Activated T-helper 1 cell treated with anti-CD3 and anti-CD28 coated beads, Interleukin-12 subunit alpha, Interleukin-12 subunit beta, Interleukin-2, Interleukin-4 antibody, amounts not matched to agents 30 ng/mL and 10 ng/mL and 1 ng/mL, durations not matched to agents 14 hours and 24 hours and 36 hours (primary cell): ENCODE measurements at regions of chr2 and their contacts with region 1.

Region 1: DNA sequence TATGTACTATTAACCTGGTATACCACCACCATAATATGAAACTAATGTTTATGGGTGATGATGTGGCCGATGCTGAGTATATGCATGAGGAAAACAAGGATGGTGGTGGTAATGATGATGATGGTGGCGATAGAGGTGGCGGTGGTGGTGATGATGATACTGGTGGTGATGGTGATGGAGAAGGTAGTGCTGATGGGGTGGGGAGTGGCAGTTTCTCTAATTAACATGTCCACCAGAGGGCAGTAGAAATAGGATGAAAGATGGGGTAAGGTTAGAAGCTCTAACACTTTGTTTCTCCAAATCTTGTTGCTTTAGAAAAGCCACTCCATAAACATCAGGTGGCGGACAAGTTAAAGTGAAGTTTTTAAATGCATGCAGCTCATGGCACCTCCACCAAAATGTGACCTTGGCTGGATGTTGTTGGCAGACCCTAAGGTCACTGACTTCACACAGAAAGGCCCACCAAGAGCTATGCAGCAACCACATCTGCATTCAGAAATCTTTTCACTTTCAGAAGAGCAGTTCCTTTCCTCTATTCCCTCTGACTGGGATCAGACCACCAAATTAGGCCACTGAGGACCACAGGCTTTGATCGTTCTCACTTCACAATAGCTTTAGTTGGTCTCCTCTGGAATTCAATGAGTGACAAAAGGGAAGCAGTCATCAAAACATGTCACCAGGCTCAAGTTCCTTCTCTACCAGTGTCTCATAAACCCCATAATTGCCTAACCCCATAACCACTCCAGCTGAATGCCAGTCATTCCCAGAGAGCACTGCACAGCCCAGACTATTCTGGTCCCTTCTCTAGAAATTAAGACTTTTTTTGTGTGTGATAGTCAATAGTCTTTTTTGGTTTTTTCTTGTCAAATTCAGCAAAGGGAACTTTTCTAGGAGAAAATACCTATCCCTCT is 7.5 kb upstream of the BCL11A start:
- DNase-seq: no peak
- H3K4me3 Mint-ChIP-seq: no peak overlapping the region
- H3K27ac Mint-ChIP-seq: no peak overlapping the region
- H3K4me1 Mint-ChIP-seq: peaks cover 6% of the 10 kb centered on the region
- H3K27me3 Mint-ChIP-seq: peaks cover 63% of the 10 kb centered on the region

Region 2: DNA sequence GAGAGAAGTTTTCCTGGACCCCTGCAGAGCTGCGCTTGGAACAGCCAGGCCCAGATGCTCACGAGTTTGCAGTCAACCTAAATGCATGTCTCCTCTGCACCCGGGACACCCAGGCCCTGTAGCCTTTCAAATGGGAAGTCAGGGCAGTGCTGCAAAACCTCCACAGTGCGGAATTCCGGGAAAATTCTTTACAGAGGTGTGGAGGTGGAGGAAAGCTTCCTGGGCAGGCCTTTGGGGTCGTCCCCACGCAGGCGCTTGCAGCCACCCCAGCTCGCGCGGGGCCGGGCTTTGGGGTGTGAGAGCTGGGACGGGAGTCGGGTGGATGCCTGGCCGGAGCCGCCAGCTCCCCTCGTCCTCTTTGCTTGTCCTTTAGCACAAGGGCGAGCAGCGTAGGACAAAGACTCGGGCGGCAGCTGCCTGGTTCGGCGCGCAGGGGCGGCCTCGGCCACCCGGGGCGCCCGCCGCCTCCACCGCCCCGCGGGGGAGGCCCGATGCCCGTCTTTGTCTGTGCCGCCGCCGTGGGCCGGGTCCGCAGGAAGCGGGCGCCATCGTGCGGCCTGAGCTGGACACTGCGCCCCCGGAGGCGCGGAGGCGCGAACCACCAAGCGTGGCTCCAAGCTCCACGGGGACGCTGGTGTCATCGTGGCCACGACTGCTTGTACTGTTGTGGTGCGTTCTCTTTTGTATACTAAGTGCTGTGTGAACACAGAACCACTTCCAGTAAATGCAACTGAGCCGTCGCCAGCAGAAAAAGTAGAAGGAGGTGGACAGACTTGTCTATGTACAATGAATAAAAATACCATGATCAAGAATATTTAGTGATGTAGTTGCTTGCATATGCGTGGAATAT is 20.7 kb after region 1 on chr2:
- intact Hi-C with region 1: loop called (anchors 1 kb)
- DNase-seq: peak; percentile 48
- H3K4me3 Mint-ChIP-seq: no peak overlapping the region
- H3K27ac Mint-ChIP-seq: no peak overlapping the region
- H3K4me1 Mint-ChIP-seq: no peaks in the 10 kb centered on the region
- H3K27me3 Mint-ChIP-seq: peaks cover 32% of the 10 kb centered on the region

Region 3: GRCh38 chr2:60674524-60675165 is 113.7 kb after region 1 on chr2:
- intact Hi-C with region 1: loop called (anchors 1 kb)
- DNase-seq: peak; percentile 57
- H3K4me3 Mint-ChIP-seq: no peak overlapping the region
- H3K27ac Mint-ChIP-seq: no peak overlapping the region
- H3K4me1 Mint-ChIP-seq: peaks cover 14% of the 10 kb centered on the region
- H3K27me3 Mint-ChIP-seq: peaks cover 2% of the 10 kb centered on the region